ENCODE measurements at regions of chr1 and their contacts with region 1.

Region 1: GRCh38 chr1:19240673-19241538 is 10.4 kb downstream of the EMC1 start:
- DNase-seq: no peak
- H3K4me3 ChIP-seq: no peak overlapping the region
- H3K27ac ChIP-seq: peak overlapping the region; percentile 25
- H3K4me1 ChIP-seq: no peaks in the 10 kb centered on the region
- H3K27me3 ChIP-seq: no peaks in the 10 kb centered on the region
- CTCF ChIP-seq: peak; percentile 71 to 91 (median 85)
- POLR2A ChIP-seq: no peak

Region 2: GRCh38 chr1:18883636-18884418 is 357.1 kb before region 1 on chr1:
- intact Hi-C with region 1: loop called (anchors 10 kb)
- DNase-seq: no peak
- H3K4me3 ChIP-seq: no peak overlapping the region
- H3K27ac ChIP-seq: no peak overlapping the region
- H3K4me1 ChIP-seq: peaks cover 27% of the 10 kb centered on the region
- H3K27me3 ChIP-seq: no peaks in the 10 kb centered on the region
- CTCF ChIP-seq: peak; percentile 48 to 76 (median 68)
- POLR2A ChIP-seq: no peak

Region 3: GRCh38 chr1:19139711-19140110 is 101.2 kb before region 1 on chr1:
- intact Hi-C with region 1: no loop called
- DNase-seq: no peak
- H3K4me3 ChIP-seq: no peak overlapping the region
- H3K27ac ChIP-seq: no peak overlapping the region
- H3K4me1 ChIP-seq: no peaks in the 10 kb centered on the region
- H3K27me3 ChIP-seq: no peaks in the 10 kb centered on the region
- CTCF ChIP-seq: no peak
- POLR2A ChIP-seq: no peak